GM12878 (cell line): ENCODE measurements at regions of chr1 and their contacts with region 1.

Region 1: DNA sequence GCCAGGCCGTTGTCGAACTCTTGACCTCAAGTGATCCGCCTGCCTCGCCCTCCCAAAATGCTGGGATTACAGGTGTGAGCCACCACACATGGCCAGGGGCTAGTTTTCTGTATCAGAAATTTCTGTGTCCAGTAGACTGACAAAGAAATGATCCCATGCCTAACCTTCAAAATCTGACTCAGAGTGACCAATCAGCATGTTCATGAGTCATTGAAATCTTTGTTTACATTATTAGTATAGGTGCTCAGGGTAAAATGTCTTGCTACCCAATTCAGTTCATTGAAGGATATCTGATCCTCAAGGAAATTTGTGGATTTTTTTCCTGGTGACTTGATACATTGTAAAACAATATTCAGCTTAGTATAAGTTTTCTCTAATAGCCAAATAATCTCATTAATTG is 11.0 kb upstream of the LDLRAD2 start:
- DNase-seq: no peak
- ATAC-seq: no peak
- H3K4me3 ChIP-seq: no peak overlapping the region
- H3K27ac ChIP-seq: no peak overlapping the region
- H3K4me1 ChIP-seq: peaks cover 7% of the 10 kb centered on the region
- H3K27me3 ChIP-seq: no peaks in the 10 kb centered on the region
- CTCF ChIP-seq: no peak
- EP300 ChIP-seq: no peak
- POLR2A ChIP-seq: no peak
- RAD21 ChIP-seq: no peak

Region 2: GRCh38 chr1:21673277-21673780 is 127.8 kb before region 1 on chr1:
- CTCF ChIA-PET with region 1: no interaction called
- POLR2A ChIA-PET with region 1: interaction called, 10 read pairs
- RAD21 ChIA-PET with region 1: interaction called, 3 read pairs
- SMC1A ChIA-PET with region 1: interaction called, 3 read pairs
- in situ Hi-C with region 1: no loop called
- intact Hi-C with region 1: no loop called
- DNase-seq: no peak
- ATAC-seq: no peak
- H3K4me3 ChIP-seq: no peak overlapping the region
- H3K27ac ChIP-seq: no peak overlapping the region
- H3K4me1 ChIP-seq: peaks cover 3% of the 10 kb centered on the region; the same call in 1 of the 2 replicates
- H3K27me3 ChIP-seq: peaks cover 0 to 6% of the 10 kb centered on the region in 2 experiments
- CTCF ChIP-seq: no peak
- EP300 ChIP-seq: no peak
- POLR2A ChIP-seq: peak; percentile 74
- RAD21 ChIP-seq: no peak

Region 3: DNA sequence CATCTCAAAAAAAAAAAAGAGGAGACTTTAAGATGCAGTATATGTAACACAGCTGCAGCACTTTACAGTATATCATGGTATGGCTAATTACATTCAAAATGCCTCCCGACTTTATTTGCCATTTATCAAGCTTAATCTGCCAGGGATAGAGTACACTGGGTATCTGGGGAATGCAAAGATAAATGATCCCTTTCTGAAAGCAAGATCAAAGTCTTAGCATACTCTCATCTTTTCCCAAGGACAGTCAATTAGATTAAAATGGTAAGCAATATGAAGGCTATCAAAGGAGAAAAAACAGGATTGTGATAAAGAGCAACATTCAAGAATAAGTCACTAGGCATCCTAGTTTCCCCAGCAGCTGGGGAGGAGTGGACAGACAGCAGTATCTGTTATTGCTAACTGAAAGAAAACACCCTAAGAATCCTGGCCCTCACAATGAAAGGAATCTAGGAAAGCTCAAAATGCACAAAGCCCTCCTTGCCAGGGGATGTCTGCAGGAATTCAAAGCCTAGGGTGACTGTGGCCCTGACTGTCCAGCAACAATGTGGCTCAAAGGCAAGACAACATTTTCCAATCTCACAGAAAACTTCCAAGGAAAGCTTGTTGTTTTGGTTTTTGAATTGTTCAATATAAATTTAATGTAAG is 75.2 kb before region 1 on chr1:
- CTCF ChIA-PET with region 1: no interaction called
- POLR2A ChIA-PET with region 1: no interaction called
- RAD21 ChIA-PET with region 1: no interaction called
- SMC1A ChIA-PET with region 1: no interaction called
- in situ Hi-C with region 1: no loop called
- intact Hi-C with region 1: no loop called
- DNase-seq: no peak
- ATAC-seq: no peak
- H3K4me3 ChIP-seq: no peak overlapping the region
- H3K27ac ChIP-seq: no peak overlapping the region
- H3K4me1 ChIP-seq: no peaks in the 10 kb centered on the region
- H3K27me3 ChIP-seq: no peaks in the 10 kb centered on the region
- CTCF ChIP-seq: no peak
- EP300 ChIP-seq: no peak
- POLR2A ChIP-seq: no peak
- RAD21 ChIP-seq: no peak

Region 4: GRCh38 chr1:21845646-21846641 is 44.8 kb after region 1 on chr1:
- CTCF ChIA-PET with region 1: no interaction called
- POLR2A ChIA-PET with region 1: no interaction called
- RAD21 ChIA-PET with region 1: no interaction called
- SMC1A ChIA-PET with region 1: no interaction called
- in situ Hi-C with region 1: no loop called
- intact Hi-C with region 1: no loop called
- DNase-seq: no peak
- ATAC-seq: no peak
- H3K4me3 ChIP-seq: no peak overlapping the region
- H3K27ac ChIP-seq: no peak overlapping the region
- H3K4me1 ChIP-seq: no peaks in the 10 kb centered on the region
- H3K27me3 ChIP-seq: no peaks in the 10 kb centered on the region
- CTCF ChIP-seq: no peak
- EP300 ChIP-seq: no peak
- POLR2A ChIP-seq: no peak
- RAD21 ChIP-seq: no peak